PC-9 (cell line): ENCODE measurements at regions of chr1 and their contacts with region 1.

Region 1: DNA sequence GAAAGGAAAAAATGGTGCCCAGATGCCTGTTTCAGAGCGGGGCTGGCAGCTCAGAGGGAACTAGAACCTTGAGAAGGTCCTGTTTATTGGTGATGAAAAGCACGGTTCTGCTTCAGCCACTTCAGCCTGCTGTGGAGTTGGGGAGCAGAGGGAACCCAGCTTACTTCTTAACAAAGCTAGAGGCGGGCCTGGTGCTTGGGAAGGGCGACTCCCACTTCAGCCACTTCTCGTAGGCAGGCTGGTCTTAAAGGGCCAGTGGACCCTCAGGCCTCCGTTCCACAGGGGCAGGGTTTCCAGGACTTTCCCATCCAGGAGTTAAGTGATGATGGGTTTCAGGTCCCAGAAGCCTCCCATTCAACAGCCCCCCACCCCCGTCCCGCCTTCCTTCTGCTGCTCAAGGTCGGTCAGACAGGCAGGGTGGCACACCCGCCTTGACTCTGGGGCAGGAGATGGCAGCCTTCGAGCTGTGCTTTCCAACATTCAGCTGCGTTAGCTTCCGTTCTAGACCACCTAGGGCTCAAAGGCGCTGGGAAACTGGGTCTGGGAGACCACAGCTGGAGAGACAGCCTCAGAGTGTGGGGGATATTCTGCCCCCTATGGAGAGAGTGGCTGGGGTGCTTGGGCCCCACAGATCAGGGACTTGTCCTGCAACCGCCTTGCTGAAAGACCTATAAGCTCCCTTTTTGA is 3.4 kb downstream of the RUNX3 start:
- DNase-seq: no peak
- H3K4me3 ChIP-seq: no peak overlapping the region
- H3K27ac ChIP-seq: no peak overlapping the region
- H3K4me1 ChIP-seq: no peaks in the 10 kb centered on the region
- H3K27me3 ChIP-seq: peaks cover 9% of the 10 kb centered on the region; the same call in 1 of the 2 replicates
- CTCF ChIP-seq: no peak

Region 2: DNA sequence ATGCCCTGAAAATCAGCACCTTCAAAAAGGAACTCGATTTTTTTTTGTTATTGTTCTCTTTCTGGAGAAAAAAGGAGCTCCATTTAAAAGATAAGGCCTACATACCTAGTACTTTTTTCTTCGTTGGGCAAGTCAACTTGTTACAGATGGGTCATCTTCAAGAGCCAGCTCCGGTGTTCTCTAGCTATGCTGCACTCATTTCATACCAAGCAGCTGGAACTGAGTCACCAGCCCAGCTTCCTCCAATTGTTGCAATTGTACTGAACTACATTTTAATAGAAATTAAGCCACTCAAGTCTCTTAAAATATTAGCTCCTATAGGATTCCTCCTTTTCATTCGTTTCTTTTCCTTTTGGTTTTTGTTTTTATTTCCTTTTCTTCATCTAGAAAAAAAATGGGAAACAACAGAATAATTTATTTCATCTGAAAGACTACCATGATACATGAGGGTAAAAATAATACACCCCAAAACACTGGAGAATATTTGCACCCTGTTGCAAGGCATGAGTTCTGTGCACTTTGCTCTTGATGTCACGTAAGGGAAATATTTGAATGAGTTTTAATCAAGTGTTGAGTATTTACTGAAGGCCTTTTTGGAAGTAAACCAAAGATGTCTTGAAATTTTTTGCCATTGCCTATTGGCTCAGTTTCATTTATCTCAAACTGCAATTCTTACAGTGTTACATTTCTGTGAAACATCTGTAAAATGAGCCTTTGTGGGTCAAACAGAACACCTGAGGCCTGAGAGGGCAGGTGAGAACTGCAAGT is 121.0 kb before region 1 on chr1:
- CTCF ChIA-PET with region 1: no interaction called
- POLR2A ChIA-PET with region 1: no interaction called
- intact Hi-C with region 1: no loop called
- DNase-seq: peak in 1 of 2 experiments; percentile 12
- H3K4me3 ChIP-seq: no peak overlapping the region
- H3K27ac ChIP-seq: no peak overlapping the region
- H3K4me1 ChIP-seq: no peaks in the 10 kb centered on the region
- H3K27me3 ChIP-seq: no peaks in the 10 kb centered on the region
- CTCF ChIP-seq: no peak

Region 3: GRCh38 chr1:24890887-24891286 is 35.8 kb before region 1 on chr1:
- CTCF ChIA-PET with region 1: no interaction called
- POLR2A ChIA-PET with region 1: no interaction called
- intact Hi-C with region 1: loop called (anchors 1 kb)
- DNase-seq: no peak
- H3K4me3 ChIP-seq: no peak overlapping the region
- H3K27ac ChIP-seq: no peak overlapping the region
- H3K4me1 ChIP-seq: no peaks in the 10 kb centered on the region
- H3K27me3 ChIP-seq: no peaks in the 10 kb centered on the region
- CTCF ChIP-seq: no peak